Dendritic cell treated with granulocyte-macrophage colony-stimulating factor and Interleukin-4, amounts not matched to agents 40 ng/mL and 50 ng/mL, for 4 days (primary cell): ENCODE measurements at regions of chr4 and their contacts with region 1.

Region 1: GRCh38 chr4:42568610-42569207 is 88.2 kb downstream of the ATP8A1 start:
- H3K4me3 Mint-ChIP-seq: no peak overlapping the region
- H3K27ac Mint-ChIP-seq: no peak overlapping the region
- H3K4me1 Mint-ChIP-seq: no peaks in the 10 kb centered on the region
- H3K27me3 Mint-ChIP-seq: no peaks in the 10 kb centered on the region

Region 2: DNA sequence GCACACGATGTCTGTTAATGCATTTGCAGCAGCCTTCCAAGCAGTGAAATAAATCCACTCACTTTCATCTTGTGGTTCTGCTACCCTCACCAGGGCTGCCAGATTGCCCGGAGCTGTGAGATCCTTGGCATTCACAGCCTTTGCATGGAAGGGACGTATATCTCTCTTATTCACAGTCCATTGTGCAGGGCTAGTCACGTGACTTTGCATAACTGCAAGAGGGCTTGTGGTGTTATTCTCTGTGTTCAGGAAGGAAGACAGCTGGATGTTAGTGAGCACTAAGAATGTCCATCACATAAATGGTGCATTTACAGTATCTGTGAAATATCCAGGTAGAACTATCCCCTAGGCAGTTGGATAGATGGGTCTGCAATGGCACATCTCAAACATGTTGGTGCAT is 319.7 kb before region 1 on chr4:
- intact Hi-C with region 1: no loop called
- H3K4me3 Mint-ChIP-seq: no peak overlapping the region
- H3K27ac Mint-ChIP-seq: no peak overlapping the region
- H3K4me1 Mint-ChIP-seq: no peaks in the 10 kb centered on the region
- H3K27me3 Mint-ChIP-seq: no peaks in the 10 kb centered on the region

Region 3: DNA sequence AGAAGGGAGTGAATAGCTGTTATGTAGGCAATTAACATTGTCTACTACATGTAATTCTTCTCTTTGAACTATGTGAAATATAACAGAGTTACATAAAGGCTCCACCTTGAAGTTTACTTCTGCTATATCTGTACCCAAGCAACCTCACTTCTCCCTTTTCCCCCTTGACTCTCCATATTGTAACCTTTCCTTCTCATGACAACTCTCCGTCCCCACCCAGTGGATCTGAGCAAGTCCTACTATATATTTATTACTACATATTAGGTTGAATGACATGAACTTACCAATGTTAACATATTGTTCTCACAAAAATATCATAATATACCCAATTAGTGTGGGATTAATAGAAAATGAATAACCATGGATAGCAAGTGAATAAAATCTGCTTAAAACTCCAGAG is 181.4 kb after region 1 on chr4:
- intact Hi-C with region 1: loop called (anchors 5 kb)
- H3K4me3 Mint-ChIP-seq: no peak overlapping the region
- H3K27ac Mint-ChIP-seq: no peak overlapping the region
- H3K4me1 Mint-ChIP-seq: peaks cover 6% of the 10 kb centered on the region
- H3K27me3 Mint-ChIP-seq: no peaks in the 10 kb centered on the region

Region 4: DNA sequence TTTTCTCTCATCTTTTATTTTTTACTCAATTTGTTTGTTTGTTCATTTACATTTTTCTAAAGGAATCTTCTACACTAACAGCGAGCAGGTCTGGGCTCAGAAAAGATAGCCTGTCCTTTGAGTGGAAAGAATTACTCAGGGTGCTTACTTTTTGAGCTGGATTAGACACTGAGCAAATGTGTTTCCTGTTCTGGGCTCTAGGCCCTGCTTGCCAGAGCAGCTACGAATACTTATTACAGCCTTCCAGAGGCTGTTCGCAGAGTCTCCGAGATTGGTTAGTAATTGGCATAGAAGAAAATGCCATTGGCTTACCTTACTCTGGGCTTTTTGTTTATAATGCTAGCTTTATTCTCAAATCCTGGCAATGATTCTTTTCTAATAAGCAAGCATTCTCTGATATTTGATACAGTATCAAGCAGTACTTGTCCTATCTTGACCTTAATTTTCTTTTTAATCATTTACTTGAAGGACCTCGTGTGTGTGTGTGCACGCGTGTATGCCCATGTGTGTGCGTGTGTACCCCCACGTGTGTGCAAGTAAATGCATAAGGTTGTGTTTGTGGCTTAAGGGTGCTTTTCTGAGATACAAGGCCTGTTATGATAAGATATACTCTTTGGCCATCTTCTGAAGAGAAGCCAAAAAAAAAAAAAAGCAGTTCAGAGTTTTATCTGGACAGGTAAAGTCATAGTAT is 247.6 kb after region 1 on chr4:
- intact Hi-C with region 1: no loop called
- H3K4me3 Mint-ChIP-seq: no peak overlapping the region
- H3K27ac Mint-ChIP-seq: no peak overlapping the region
- H3K4me1 Mint-ChIP-seq: no peaks in the 10 kb centered on the region
- H3K27me3 Mint-ChIP-seq: no peaks in the 10 kb centered on the region

Region 5: GRCh38 chr4:42865572-42866189 is 297.0 kb after region 1 on chr4:
- intact Hi-C with region 1: loop called (anchors 1 kb)
- H3K4me3 Mint-ChIP-seq: no peak overlapping the region
- H3K27ac Mint-ChIP-seq: no peak overlapping the region
- H3K4me1 Mint-ChIP-seq: no peaks in the 10 kb centered on the region
- H3K27me3 Mint-ChIP-seq: no peaks in the 10 kb centered on the region